Heart left ventricle (tissue), 16 donors: ENCODE measurements at regions of chr1 and their contacts with region 1.

Region 1: DNA sequence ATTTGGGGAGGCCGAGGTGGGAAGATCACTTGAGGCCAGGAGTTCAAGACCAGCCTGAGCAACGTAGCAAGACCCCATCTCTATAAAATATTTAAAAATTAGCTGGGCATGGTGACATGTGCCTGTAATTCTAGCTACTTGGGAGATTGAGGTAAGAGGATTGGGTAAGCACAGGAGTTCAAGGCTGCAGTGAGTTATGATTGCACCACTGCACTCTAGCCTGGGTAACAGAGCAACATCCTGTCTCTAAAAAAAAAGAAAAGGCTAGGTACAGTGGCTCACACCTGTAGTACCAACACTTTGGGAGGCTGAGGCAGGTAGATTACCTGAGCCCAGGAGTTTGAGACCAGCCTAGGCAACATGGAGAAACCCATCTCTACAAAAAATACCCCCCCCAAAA is 35.7 kb upstream of the RCC1 start:
- DNase-seq: no peak
- ATAC-seq: no peak
- H3K4me3 ChIP-seq: no peak overlapping the region
- H3K27ac ChIP-seq: no peak overlapping the region
- H3K4me1 ChIP-seq: peaks cover 0 to 6% (median 0%) of the 10 kb centered on the region in 12 donors
- H3K27me3 ChIP-seq: no peaks in the 10 kb centered on the region
- CTCF ChIP-seq: no peak
- POLR2A ChIP-seq: no peak

Region 2: DNA sequence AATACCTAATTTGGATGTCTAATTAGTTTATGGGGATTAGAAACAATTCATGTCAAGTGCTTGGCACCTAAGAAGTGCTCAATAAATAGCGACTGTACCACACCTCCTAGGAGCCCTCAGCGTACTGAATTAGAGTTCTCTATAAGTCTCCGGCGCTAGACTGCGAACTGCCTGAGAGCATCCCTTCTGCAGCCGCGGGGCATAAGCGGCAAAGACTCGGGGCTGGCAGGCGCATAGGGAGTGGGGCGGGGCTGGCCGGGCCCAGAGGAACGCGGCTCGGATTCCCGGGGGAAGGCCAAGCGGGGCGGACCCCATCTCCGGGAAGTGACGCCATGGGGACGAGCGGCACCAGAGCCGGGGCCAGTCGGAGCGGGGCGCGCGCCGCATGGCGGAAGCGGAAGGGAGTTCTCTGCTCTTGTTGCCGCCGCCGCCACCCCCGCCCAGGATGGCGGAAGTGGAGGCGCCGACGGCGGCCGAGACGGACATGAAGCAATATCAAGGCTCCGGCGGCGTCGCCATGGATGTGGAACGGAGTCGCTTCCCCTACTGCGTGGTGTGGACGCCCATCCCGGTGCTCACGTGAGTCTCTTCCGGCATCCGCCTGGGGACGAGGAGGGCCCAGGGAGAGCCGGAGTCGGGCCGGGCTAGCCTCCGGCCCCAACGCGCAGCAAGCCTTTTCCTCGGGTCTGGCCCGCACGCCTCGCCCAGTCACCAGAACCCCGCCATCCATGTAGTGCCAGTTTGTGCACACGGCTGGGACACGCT is 1148.2 kb before region 1 on chr1 and contains the start of gene TMEM222:
- intact Hi-C with region 1: no loop called
- DNase-seq: peak; percentile 98 to 99 (median 98)
- ATAC-seq: peak; percentile 96 to 99 (median 98)
- H3K4me3 ChIP-seq: peak within 1 kb of the TSS; percentile 68 to 100 (median 80)
- H3K27ac ChIP-seq: peak within 1 kb of the TSS; percentile 84 to 95 (median 90)
- H3K4me1 ChIP-seq: peaks cover 5 to 48% (median 33%) of the 10 kb centered on the region in 12 donors
- H3K27me3 ChIP-seq: peaks cover 0 to 5% (median 0%) of the 10 kb centered on the region in 9 donors
- CTCF ChIP-seq: peak in 9 of 12 donors; percentile 10 to 50 (median 18)
- POLR2A ChIP-seq: peak in 1 of 2 donors; percentile 66
- total RNA-seq, gene TMEM222: 18.1 to 32.5 (median 25.9) TPM

Region 3: GRCh38 chr1:28280501-28280900 is 189.6 kb before region 1 on chr1:
- intact Hi-C with region 1: no loop called
- DNase-seq: no peak
- ATAC-seq: peak in 3 of 4 donors; percentile 29 to 41 (median 39)
- H3K4me3 ChIP-seq: no peak overlapping the region
- H3K27ac ChIP-seq: peak overlapping the region in 3 of 12 donors; percentile 46 to 66 (median 49)
- H3K4me1 ChIP-seq: peaks cover 0 to 30% (median 2%) of the 10 kb centered on the region in 12 donors
- H3K27me3 ChIP-seq: no peaks in the 10 kb centered on the region
- CTCF ChIP-seq: no peak
- POLR2A ChIP-seq: no peak

Region 4: GRCh38 chr1:28359592-28360239 is 110.4 kb before region 1 on chr1:
- intact Hi-C with region 1: loop called in 1 of 10 experiments (anchors 5 kb)
- DNase-seq: peak; percentile 43 to 74 (median 64)
- ATAC-seq: peak in 2 of 4 donors; percentile 45 to 59
- H3K4me3 ChIP-seq: no peak overlapping the region
- H3K27ac ChIP-seq: no peak overlapping the region
- H3K4me1 ChIP-seq: peaks cover 0 to 2% (median 0%) of the 10 kb centered on the region in 12 donors
- H3K27me3 ChIP-seq: no peaks in the 10 kb centered on the region
- CTCF ChIP-seq: peak; percentile 52 to 78 (median 62)
- POLR2A ChIP-seq: no peak

Region 5: GRCh38 chr1:28409090-28409489 is 61.1 kb before region 1 on chr1:
- intact Hi-C with region 1: loop called in 9 of 10 experiments (anchors 1 to 10 kb)
- DNase-seq: no peak
- ATAC-seq: no peak
- H3K4me3 ChIP-seq: no peak overlapping the region
- H3K27ac ChIP-seq: no peak overlapping the region
- H3K4me1 ChIP-seq: peaks cover 0 to 13% (median 0%) of the 10 kb centered on the region in 12 donors
- H3K27me3 ChIP-seq: no peaks in the 10 kb centered on the region
- CTCF ChIP-seq: no peak
- POLR2A ChIP-seq: no peak

Region 6: GRCh38 chr1:28417429-28417922 is 52.7 kb before region 1 on chr1:
- intact Hi-C with region 1: loop called in 2 of 10 experiments (anchors 5 to 10 kb)
- DNase-seq: no peak
- ATAC-seq: no peak
- H3K4me3 ChIP-seq: peak overlapping the region in 1 of 12 donors; percentile 24
- H3K27ac ChIP-seq: no peak overlapping the region
- H3K4me1 ChIP-seq: peaks cover 0 to 33% (median 3%) of the 10 kb centered on the region in 12 donors
- H3K27me3 ChIP-seq: no peaks in the 10 kb centered on the region
- CTCF ChIP-seq: no peak
- POLR2A ChIP-seq: no peak

Region 7: GRCh38 chr1:29621826-29622435 is 1151.8 kb after region 1 on chr1:
- intact Hi-C with region 1: no loop called
- DNase-seq: no peak
- ATAC-seq: no peak
- H3K4me3 ChIP-seq: no peak overlapping the region
- H3K27ac ChIP-seq: no peak overlapping the region
- H3K4me1 ChIP-seq: no peaks in the 10 kb centered on the region
- H3K27me3 ChIP-seq: peaks cover 0 to 29% (median 2%) of the 10 kb centered on the region in 9 donors
- CTCF ChIP-seq: no peak
- POLR2A ChIP-seq: no peak